CD4-positive, alpha-beta memory T cell (primary cell): ENCODE measurements at regions of chr12 and their contacts with region 1.

Region 1: DNA sequence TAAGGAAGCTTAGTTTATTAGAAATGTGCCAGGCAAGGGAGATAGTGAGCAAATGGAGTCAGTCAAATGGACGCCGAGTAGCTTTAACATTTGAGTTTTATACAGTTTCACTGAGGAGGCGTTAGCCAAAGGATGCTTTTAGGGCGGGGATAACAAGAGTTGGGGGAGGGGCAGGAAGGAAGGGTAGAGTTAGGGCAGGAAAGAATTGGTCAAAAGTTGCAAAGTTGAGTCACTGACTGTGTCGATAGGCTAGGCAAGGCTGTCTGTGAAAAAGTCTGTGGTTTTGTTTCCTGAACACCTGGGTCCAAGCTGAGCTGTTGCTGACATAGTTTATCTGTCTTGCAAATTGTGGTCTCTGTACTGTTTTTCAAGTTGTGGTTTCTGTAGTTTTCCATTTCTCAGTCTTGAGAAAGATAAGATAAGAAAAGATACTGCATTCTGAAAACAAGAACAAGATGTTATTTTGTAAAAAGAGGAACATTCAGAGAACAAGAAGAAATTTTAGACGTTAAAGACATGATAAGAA is 62.6 kb upstream of the RESF1 start:
- DNase-seq: peak; percentile 88 to 95 (median 94)
- H3K4me3 ChIP-seq: peak overlapping the region; percentile 9 to 22
- H3K4me3 Mint-ChIP-seq: peak overlapping the region; percentile 63 to 88 (median 74)
- H3K27ac ChIP-seq: peak overlapping the region; percentile 55
- H3K27ac Mint-ChIP-seq: peak overlapping the region; percentile 91 to 99 (median 97)
- H3K4me1 ChIP-seq: peaks cover 75% of the 10 kb centered on the region
- H3K4me1 Mint-ChIP-seq: peaks cover 34 to 78% (median 49%) of the 10 kb centered on the region in 4 donors
- H3K27me3 ChIP-seq: no peaks in the 10 kb centered on the region
- H3K27me3 Mint-ChIP-seq: no peaks in the 10 kb centered on the region

Region 2: GRCh38 chr12:31603546-31604009 is 293.0 kb before region 1 on chr12:
- CTCF ChIA-PET with region 1: no interaction called
- POLR2A ChIA-PET with region 1: no interaction called
- intact Hi-C with region 1: no loop called
- DNase-seq: no peak
- H3K4me3 ChIP-seq: no peak overlapping the region
- H3K4me3 Mint-ChIP-seq: no peak overlapping the region
- H3K27ac ChIP-seq: no peak overlapping the region
- H3K27ac Mint-ChIP-seq: no peak overlapping the region
- H3K4me1 ChIP-seq: no peaks in the 10 kb centered on the region
- H3K4me1 Mint-ChIP-seq: no peaks in the 10 kb centered on the region
- H3K27me3 ChIP-seq: no peaks in the 10 kb centered on the region
- H3K27me3 Mint-ChIP-seq: peaks cover 0 to 9% of the 10 kb centered on the region in 2 donors

Region 3: GRCh38 chr12:31659087-31659933 is 237.3 kb before region 1 on chr12 and contains the start of gene ETFBKMT:
- CTCF ChIA-PET with region 1: no interaction called
- POLR2A ChIA-PET with region 1: interaction called, 19 read pairs
- intact Hi-C with region 1: loop called (anchors 1 kb)
- DNase-seq: peak; percentile 91 to 97 (median 94)
- H3K4me3 ChIP-seq: peak within 1 kb of the TSS; percentile 86 to 89
- H3K4me3 Mint-ChIP-seq: peak within 1 kb of the TSS; percentile 92 to 99 (median 94)
- H3K27ac ChIP-seq: peak within 1 kb of the TSS; percentile 86
- H3K27ac Mint-ChIP-seq: peak within 1 kb of the TSS; percentile 91 to 99 (median 98)
- H3K4me1 ChIP-seq: peaks cover 17% of the 10 kb centered on the region
- H3K4me1 Mint-ChIP-seq: peaks cover 8 to 21% (median 14%) of the 10 kb centered on the region in 4 donors
- H3K27me3 ChIP-seq: no peaks in the 10 kb centered on the region
- H3K27me3 Mint-ChIP-seq: no peaks in the 10 kb centered on the region
- total RNA-seq, gene ETFBKMT: 1.5 to 1.8 TPM

Region 4: DNA sequence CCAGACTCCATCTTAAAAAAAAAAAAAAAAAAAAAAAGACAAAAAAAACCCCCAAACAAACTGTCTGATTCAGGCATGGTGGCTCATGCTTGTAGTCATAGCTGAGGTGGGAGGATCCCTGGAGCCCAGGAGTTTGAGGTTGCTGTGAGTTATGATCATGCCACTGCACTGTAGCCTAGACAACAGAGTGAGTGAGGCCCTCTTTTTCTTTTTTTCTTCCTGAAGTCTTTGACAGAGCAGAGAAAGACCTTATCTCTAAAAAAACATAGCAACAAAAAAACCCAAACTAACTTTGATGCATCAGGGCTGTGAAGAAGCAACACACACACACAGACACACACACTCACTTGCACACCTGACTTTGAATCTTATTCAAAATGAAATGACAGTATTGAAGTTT is 160.1 kb before region 1 on chr12:
- CTCF ChIA-PET with region 1: no interaction called
- POLR2A ChIA-PET with region 1: interaction called, 32 read pairs
- intact Hi-C with region 1: loop called (anchors 1 kb)
- DNase-seq: peak; percentile 72 to 92 (median 82)
- H3K4me3 ChIP-seq: no peak overlapping the region
- H3K4me3 Mint-ChIP-seq: peak overlapping the region in 7 of 8 donors; percentile 13 to 63 (median 43)
- H3K27ac ChIP-seq: peak overlapping the region; percentile 39
- H3K27ac Mint-ChIP-seq: peak overlapping the region; percentile 90 to 98 (median 94)
- H3K4me1 ChIP-seq: peaks cover 53% of the 10 kb centered on the region
- H3K4me1 Mint-ChIP-seq: peaks cover 35 to 74% (median 55%) of the 10 kb centered on the region in 4 donors
- H3K27me3 ChIP-seq: no peaks in the 10 kb centered on the region
- H3K27me3 Mint-ChIP-seq: no peaks in the 10 kb centered on the region

Region 5: DNA sequence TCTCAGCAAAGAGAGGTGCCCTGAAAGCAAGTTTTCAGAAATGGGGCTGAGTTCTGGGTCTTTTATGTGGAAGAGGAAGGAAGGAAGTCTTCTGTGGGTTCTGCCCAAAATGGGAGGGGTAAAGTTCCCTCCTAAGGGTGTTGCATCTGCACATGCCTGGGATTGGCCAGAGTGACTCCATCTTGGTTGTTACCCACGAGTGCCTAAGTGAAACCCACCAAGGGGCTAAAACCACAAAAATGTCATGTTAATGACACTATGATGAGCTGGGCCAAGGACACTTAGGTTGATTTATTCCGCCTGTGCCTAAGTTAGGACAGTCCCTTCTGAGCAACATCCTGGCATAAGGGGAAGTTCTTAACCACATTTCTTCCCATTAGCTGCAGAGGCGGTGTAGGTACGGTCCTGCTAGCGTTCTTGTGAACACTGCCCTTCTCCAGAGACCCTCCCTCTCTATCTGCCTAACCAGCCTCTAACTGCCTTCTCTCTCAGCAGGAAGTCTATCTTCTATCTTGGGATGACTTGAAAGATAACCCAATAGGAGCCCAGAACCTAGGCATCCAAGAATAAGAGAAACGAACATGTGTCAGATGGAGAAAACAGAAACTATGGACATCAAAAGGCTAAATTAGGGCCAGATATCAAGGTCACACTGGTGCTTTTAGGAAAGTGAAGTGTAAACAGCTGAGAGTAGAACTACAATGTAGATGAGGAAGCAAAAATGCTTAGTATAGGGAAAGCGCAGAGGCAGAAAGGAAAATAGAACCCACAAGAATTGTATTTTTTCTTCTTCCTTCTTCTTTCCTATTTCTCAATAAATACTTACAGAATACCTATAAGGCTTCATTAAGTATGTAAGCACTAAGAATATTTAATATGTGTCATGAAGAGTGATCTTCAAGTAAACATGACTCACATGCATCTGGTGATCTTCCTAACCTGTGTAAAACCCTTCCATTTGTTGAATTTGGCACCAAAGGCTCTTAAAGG is 63.5 kb before region 1 on chr12:
- CTCF ChIA-PET with region 1: no interaction called
- POLR2A ChIA-PET with region 1: interaction called, 25 read pairs
- intact Hi-C with region 1: loop called (anchors 2 kb)
- DNase-seq: peak; percentile 48 to 73 (median 67)
- H3K4me3 ChIP-seq: peak overlapping the region; percentile 7 to 21
- H3K4me3 Mint-ChIP-seq: peak overlapping the region in 7 of 8 donors; percentile 62 to 81 (median 70)
- H3K27ac ChIP-seq: no peak overlapping the region
- H3K27ac Mint-ChIP-seq: peak overlapping the region; percentile 57 to 90 (median 83)
- H3K4me1 ChIP-seq: peaks cover 43% of the 10 kb centered on the region
- H3K4me1 Mint-ChIP-seq: peaks cover 34 to 56% (median 47%) of the 10 kb centered on the region in 4 donors
- H3K27me3 ChIP-seq: no peaks in the 10 kb centered on the region
- H3K27me3 Mint-ChIP-seq: no peaks in the 10 kb centered on the region

Region 6: GRCh38 chr12:31922341-31923062 is 25.9 kb after region 1 on chr12:
- CTCF ChIA-PET with region 1: interaction called, 5 read pairs
- POLR2A ChIA-PET with region 1: interaction called, 11 read pairs
- intact Hi-C with region 1: no loop called
- DNase-seq: no peak
- H3K4me3 ChIP-seq: no peak overlapping the region
- H3K4me3 Mint-ChIP-seq: peak overlapping the region in 1 of 8 donors; percentile 15
- H3K27ac ChIP-seq: no peak overlapping the region
- H3K27ac Mint-ChIP-seq: peak overlapping the region in 1 of 7 donors; percentile 69
- H3K4me1 ChIP-seq: peaks cover 3% of the 10 kb centered on the region
- H3K4me1 Mint-ChIP-seq: peaks cover 1 to 8% (median 4%) of the 10 kb centered on the region in 4 donors
- H3K27me3 ChIP-seq: no peaks in the 10 kb centered on the region
- H3K27me3 Mint-ChIP-seq: no peaks in the 10 kb centered on the region

Region 7: GRCh38 chr12:31989571-31990362 is 93.2 kb after region 1 on chr12:
- CTCF ChIA-PET with region 1: interaction called, 5 read pairs
- POLR2A ChIA-PET with region 1: interaction called, 11 read pairs
- intact Hi-C with region 1: no loop called
- DNase-seq: no peak
- H3K4me3 ChIP-seq: no peak overlapping the region
- H3K4me3 Mint-ChIP-seq: peak overlapping the region in 1 of 8 donors; percentile 58
- H3K27ac ChIP-seq: no peak overlapping the region
- H3K27ac Mint-ChIP-seq: peak overlapping the region in 5 of 7 donors; percentile 14 to 84 (median 63)
- H3K4me1 ChIP-seq: peaks cover 7% of the 10 kb centered on the region
- H3K4me1 Mint-ChIP-seq: peaks cover 20 to 28% (median 27%) of the 10 kb centered on the region in 4 donors
- H3K27me3 ChIP-seq: no peaks in the 10 kb centered on the region
- H3K27me3 Mint-ChIP-seq: no peaks in the 10 kb centered on the region